ENCODE measurements at regions of chr2 and their contacts with region 1.

Region 1: GRCh38 chr2:10434886-10435819 is 13.0 kb downstream of the ODC1 start:
- DNase-seq: peak; percentile 77
- ATAC-seq: peak; percentile 43
- H3K4me3 Mint-ChIP-seq: no peak overlapping the region
- H3K27ac Mint-ChIP-seq: no peak overlapping the region
- H3K4me1 Mint-ChIP-seq: peaks cover 10% of the 10 kb centered on the region
- H3K27me3 Mint-ChIP-seq: peaks cover 4% of the 10 kb centered on the region

Region 2: GRCh38 chr2:10072656-10073480 is 362.3 kb before region 1 on chr2:
- CTCF ChIA-PET with region 1: interaction called, 86 read pairs
- DNase-seq: peak; percentile 86
- ATAC-seq: peak; percentile 95
- H3K4me3 Mint-ChIP-seq: no peak overlapping the region
- H3K27ac Mint-ChIP-seq: no peak overlapping the region
- H3K4me1 Mint-ChIP-seq: peaks cover 16% of the 10 kb centered on the region
- H3K27me3 Mint-ChIP-seq: peaks cover 51% of the 10 kb centered on the region

Region 3: DNA sequence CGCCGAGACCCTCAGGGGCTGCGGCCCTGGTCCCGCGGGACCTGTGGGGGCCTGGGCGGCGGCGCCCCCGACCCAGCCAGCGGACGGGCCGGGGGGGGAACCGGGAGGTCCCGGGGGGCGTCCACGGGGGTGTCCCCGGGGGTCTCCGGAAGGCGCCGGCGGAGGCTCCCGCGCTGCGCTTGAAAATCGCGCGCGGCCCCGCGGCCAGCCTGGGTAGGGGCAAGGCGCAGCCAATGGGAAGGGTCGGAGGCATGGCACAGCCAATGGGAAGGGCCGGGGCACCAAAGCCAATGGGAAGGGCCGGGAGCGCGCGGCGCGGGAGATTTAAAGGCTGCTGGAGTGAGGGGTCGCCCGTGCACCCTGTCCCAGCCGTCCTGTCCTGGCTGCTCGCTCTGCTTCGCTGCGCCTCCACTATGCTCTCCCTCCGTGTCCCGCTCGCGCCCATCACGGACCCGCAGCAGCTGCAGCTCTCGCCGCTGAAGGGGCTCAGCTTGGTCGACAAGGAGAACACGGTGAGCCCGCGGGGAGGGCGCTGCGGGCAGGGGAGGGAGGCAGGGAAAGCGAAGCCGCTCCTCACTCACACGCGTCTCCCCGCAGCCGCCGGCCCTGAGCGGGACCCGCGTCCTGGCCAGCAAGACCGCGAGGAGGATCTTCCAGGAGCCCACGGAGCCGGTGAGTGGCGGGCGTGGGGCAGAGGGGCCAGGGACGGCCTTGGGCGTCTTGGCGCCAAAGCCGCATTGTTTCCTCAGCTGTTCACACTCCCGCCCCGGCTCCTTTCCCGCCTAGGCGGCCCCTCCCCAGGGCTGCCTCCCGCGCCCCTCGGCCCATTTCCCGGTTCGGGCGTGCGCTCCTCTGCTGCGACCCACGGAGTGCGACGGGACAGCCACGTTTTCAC is 312.5 kb before region 1 on chr2 and contains the start of gene RRM2:
- CTCF ChIA-PET with region 1: interaction called, 86 read pairs
- DNase-seq: peak; percentile 98
- ATAC-seq: peak; percentile 80
- H3K4me3 Mint-ChIP-seq: peak within 1 kb of the TSS; percentile 97
- H3K27ac Mint-ChIP-seq: peak within 1 kb of the TSS; percentile 99
- H3K4me1 Mint-ChIP-seq: peaks cover 55% of the 10 kb centered on the region
- H3K27me3 Mint-ChIP-seq: no peaks in the 10 kb centered on the region
- total RNA-seq, gene RRM2: 506 to 648 TPM

Region 4: GRCh38 chr2:10141736-10142642 is 293.2 kb before region 1 on chr2:
- CTCF ChIA-PET with region 1: interaction called, 37 read pairs
- DNase-seq: no peak
- ATAC-seq: peak; percentile 52
- H3K4me3 Mint-ChIP-seq: no peak overlapping the region
- H3K27ac Mint-ChIP-seq: peak overlapping the region; percentile 46
- H3K4me1 Mint-ChIP-seq: peaks cover 28% of the 10 kb centered on the region
- H3K27me3 Mint-ChIP-seq: no peaks in the 10 kb centered on the region

Region 5: DNA sequence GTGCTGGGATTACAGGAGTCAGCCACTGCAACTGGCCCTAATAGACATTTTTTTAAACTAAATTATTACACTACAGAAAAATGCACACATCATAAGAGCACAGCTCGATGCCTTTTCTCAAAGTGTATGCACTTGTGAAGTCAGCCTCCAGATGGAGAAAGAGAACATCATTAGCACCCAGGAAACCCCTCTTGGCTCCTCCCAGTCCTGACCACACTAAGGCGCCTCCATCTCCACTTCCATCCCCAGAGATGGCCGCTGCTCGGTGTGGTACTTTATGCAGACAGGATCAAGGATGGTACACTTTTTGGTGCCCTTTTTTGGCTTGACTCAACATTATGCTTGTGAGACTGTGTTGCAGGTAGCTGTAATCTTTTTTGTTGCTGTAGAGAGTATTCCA is 277.9 kb before region 1 on chr2:
- CTCF ChIA-PET with region 1: interaction called, 11 read pairs
- DNase-seq: no peak
- ATAC-seq: no peak
- H3K4me3 Mint-ChIP-seq: no peak overlapping the region
- H3K27ac Mint-ChIP-seq: no peak overlapping the region
- H3K4me1 Mint-ChIP-seq: peaks cover 14% of the 10 kb centered on the region
- H3K27me3 Mint-ChIP-seq: no peaks in the 10 kb centered on the region

Region 6: DNA sequence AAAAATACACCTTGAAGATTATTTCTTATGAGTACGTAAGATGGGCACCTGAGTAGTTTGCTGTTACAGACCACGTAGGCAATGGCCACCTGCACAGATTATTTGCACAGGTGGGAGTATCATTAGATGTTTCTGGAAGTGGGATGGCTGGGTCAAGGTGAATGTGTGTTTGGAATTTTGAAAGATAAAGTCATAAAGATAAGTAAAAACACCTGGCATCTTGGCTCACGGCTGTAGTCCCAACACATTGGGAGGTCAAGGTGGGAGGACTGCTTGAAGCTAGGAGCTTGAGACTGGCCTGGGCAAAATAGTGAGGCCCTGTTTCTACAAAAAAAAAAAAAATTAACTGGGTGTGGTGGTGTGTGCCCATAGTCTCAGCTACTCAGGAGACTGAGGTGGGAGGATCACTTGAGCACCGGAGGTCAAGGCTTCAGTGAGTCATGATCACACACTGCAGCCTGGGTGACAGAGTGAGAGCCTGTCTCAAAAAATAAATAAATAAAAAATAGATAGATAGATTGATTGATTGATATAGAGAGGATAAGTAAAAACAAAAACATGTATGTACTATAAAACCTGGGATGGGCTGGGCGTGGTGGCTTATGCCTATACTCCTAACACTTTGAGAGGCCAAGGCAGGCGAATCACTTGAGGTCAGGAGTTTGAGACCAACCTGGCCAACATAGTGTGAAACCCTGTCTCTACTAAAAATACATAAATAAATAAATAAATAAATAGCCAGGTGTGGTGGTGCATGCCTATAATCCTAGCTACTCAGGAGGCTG is 17.4 kb before region 1 on chr2:
- CTCF ChIA-PET with region 1: interaction called, 70 read pairs
- DNase-seq: no peak
- ATAC-seq: no peak
- H3K4me3 Mint-ChIP-seq: no peak overlapping the region
- H3K27ac Mint-ChIP-seq: no peak overlapping the region
- H3K4me1 Mint-ChIP-seq: peaks cover 12% of the 10 kb centered on the region
- H3K27me3 Mint-ChIP-seq: no peaks in the 10 kb centered on the region

Region 7: DNA sequence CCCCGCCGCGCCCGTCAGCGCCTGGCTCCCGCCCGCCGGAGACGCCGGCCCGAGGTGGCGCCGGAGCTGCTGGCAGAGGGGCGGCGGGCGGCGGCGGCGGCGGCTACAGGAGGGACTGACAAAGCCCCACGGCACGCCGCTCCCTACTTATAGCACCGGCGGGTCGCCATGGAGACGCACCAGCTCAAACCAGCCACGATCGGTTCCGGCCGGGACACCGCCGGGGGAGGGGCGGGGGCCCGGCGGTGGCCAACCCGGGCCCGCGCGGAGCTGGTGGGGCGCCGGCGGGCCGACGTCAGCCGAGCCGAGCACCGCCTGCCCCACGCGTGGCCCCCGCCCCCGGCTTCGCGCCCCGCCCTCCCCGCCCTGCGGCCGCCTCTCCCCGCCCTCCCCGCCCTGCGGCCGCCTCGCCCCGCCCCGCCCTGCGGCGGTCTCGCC is 13.1 kb after region 1 on chr2 and contains the start of gene ODC1:
- CTCF ChIA-PET with region 1: interaction called, 59 read pairs
- DNase-seq: peak; percentile 96
- ATAC-seq: peak; percentile 83
- H3K4me3 Mint-ChIP-seq: peak within 1 kb of the TSS; percentile 82
- H3K27ac Mint-ChIP-seq: peak within 1 kb of the TSS; percentile 86
- H3K4me1 Mint-ChIP-seq: peaks cover 42% of the 10 kb centered on the region
- H3K27me3 Mint-ChIP-seq: no peaks in the 10 kb centered on the region
- total RNA-seq, gene ODC1: 64.8 to 80.3 TPM

Measured in activated CD8-positive, alpha-beta memory T cell treated with anti-CD3 and anti-CD28 coated beads, Interleukin-2, amount 10 ng/mL, durations not matched to agents 7 days and 5 days (primary cell).